Activated CD4-positive, alpha-beta T cell treated with anti-CD3 and anti-CD28 coated beads for 36 hours (primary cell): ENCODE measurements at regions of chr15 and their contacts with region 1.

Region 1: DNA sequence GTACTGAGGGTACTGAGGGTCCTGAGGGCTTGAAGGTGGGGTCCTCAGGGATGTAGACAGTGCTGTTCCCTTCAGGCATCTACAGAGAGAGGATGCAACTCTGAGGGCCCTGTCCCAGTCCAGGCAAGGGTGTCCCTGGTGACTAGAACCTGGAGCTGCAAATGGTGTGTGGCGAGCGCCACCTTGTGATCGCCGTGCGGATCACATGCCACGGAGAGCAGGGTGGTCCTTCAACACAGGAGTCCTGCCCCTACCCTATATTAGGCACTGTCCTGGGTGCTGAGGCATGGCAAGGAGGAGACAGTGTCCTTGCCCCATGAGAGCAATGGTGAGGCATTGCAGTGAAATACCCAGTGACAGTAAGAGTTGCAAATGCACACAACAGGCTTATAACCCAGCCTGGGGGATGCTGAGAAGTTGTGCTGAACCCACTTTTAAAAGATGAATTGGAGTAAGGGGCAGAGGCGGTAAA is 23.6 kb downstream of the RHCG start:
- DNase-seq: peak; percentile 75
- ATAC-seq: peak; percentile 83
- H3K4me3 Mint-ChIP-seq: no peak overlapping the region
- H3K27ac Mint-ChIP-seq: no peak overlapping the region
- H3K4me1 Mint-ChIP-seq: no peaks in the 10 kb centered on the region
- H3K27me3 Mint-ChIP-seq: peaks cover 17% of the 10 kb centered on the region

Region 2: GRCh38 chr15:89430530-89431341 is 42.1 kb before region 1 on chr15:
- CTCF ChIA-PET with region 1: interaction called, 6 read pairs
- POLR2A ChIA-PET with region 1: no interaction called
- intact Hi-C with region 1: loop called in 1 of 2 experiments (anchors 1 kb)
- DNase-seq: peak; percentile 94
- ATAC-seq: peak; percentile 96
- H3K4me3 Mint-ChIP-seq: peak overlapping the region; percentile 71
- H3K27ac Mint-ChIP-seq: peak overlapping the region; percentile 55
- H3K4me1 Mint-ChIP-seq: peaks cover 7% of the 10 kb centered on the region
- H3K27me3 Mint-ChIP-seq: peaks cover 18% of the 10 kb centered on the region

Region 3: DNA sequence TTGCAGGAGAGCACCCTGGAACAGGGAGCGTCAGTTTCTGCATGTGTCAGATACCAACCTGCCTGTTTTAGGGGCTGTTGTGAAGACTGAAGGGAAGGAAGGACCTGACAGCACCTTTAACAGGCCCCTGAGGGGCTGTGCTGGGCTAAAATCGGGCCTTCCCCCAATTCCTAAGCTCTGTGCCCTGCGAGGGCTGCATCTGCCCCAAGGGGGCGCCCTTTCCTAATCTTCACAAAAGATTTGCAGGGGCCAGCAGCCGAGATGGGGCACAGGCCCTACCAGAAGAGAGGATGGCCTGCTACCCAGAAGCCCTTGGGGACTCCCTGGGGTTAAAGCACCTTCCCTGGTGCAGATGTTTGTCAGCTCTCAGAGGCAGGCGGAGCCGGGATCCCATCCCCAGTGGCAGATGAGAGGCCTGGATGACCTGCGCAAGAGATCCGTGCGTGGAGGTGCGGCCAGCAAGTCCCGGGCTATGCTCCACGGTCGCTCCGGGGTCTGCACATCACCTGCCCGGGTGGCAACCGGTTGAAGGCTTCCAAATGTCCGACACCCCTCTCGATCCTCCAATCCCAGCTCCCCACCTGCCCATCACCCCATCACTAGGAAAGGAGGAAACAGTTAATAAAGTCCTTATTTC is 30.0 kb before region 1 on chr15:
- CTCF ChIA-PET with region 1: interaction called, 6 read pairs
- POLR2A ChIA-PET with region 1: no interaction called
- intact Hi-C with region 1: loop called in 1 of 2 experiments (anchors 1 kb)
- DNase-seq: peak; percentile 82
- ATAC-seq: peak; percentile 71
- H3K4me3 Mint-ChIP-seq: no peak overlapping the region
- H3K27ac Mint-ChIP-seq: no peak overlapping the region
- H3K4me1 Mint-ChIP-seq: no peaks in the 10 kb centered on the region
- H3K27me3 Mint-ChIP-seq: peaks cover 20% of the 10 kb centered on the region